Activated T-helper 1 cell treated with anti-CD3 and anti-CD28 coated beads, Interleukin-12 subunit alpha, Interleukin-12 subunit beta, Interleukin-2, Interleukin-4 antibody, amounts not matched to agents 30 ng/mL and 10 ng/mL and 1 ng/mL, durations not matched to agents 14 hours and 24 hours and 36 hours (primary cell): ENCODE measurements at regions of chr19 and their contacts with region 1.

Region 1: GRCh38 chr19:54379187-54379678 is 14.5 kb upstream of the LAIR1 start:
- DNase-seq: no peak
- H3K4me3 Mint-ChIP-seq: no peak overlapping the region
- H3K27ac Mint-ChIP-seq: peak overlapping the region; percentile 15
- H3K4me1 Mint-ChIP-seq: peaks cover 51% of the 10 kb centered on the region
- H3K27me3 Mint-ChIP-seq: peaks cover 15% of the 10 kb centered on the region

Region 2: GRCh38 chr19:54231077-54231931 is 147.9 kb before region 1 on chr19:
- intact Hi-C with region 1: no loop called
- DNase-seq: peak; percentile 77
- H3K4me3 Mint-ChIP-seq: no peak overlapping the region
- H3K27ac Mint-ChIP-seq: no peak overlapping the region
- H3K4me1 Mint-ChIP-seq: peaks cover 6% of the 10 kb centered on the region
- H3K27me3 Mint-ChIP-seq: peaks cover 43% of the 10 kb centered on the region

Region 3: DNA sequence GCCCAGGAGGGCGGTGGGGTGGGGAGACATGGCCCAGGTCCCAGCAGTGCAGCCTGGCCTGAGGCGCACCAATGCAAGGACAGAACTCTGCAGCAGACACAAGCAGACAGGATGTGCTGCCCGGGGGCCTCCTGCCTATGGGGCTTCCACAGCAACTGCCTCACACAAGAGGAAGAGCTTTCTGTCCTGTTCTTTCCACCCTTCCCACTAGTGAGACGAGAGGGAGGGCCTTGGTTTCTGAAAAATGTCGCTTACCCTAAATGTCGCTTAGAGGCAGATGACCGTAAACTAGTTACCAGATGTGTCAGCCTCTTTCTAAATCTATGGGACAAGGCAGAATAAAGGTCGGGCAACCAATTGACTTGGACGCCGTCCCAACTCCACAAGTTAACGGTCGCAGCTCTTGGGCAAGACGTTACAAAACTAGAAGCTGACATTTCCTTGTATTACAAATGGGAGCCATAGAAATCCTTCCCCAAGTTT is 14.4 kb before region 1 on chr19 and contains the start of gene LAIR1:
- intact Hi-C with region 1: loop called (anchors 2 kb)
- DNase-seq: peak; percentile 37
- H3K4me3 Mint-ChIP-seq: peak within 1 kb of the TSS; percentile 88
- H3K27ac Mint-ChIP-seq: peak within 1 kb of the TSS; percentile 84
- H3K4me1 Mint-ChIP-seq: peaks cover 61% of the 10 kb centered on the region
- H3K27me3 Mint-ChIP-seq: peaks cover 13% of the 10 kb centered on the region
- total RNA-seq, gene LAIR1: 9.2 and 9.4 TPM in 2 replicates